Naive thymus-derived CD8-positive, alpha-beta T cell (primary cell): ENCODE measurements at regions of chr17 and their contacts with region 1.

Region 1: DNA sequence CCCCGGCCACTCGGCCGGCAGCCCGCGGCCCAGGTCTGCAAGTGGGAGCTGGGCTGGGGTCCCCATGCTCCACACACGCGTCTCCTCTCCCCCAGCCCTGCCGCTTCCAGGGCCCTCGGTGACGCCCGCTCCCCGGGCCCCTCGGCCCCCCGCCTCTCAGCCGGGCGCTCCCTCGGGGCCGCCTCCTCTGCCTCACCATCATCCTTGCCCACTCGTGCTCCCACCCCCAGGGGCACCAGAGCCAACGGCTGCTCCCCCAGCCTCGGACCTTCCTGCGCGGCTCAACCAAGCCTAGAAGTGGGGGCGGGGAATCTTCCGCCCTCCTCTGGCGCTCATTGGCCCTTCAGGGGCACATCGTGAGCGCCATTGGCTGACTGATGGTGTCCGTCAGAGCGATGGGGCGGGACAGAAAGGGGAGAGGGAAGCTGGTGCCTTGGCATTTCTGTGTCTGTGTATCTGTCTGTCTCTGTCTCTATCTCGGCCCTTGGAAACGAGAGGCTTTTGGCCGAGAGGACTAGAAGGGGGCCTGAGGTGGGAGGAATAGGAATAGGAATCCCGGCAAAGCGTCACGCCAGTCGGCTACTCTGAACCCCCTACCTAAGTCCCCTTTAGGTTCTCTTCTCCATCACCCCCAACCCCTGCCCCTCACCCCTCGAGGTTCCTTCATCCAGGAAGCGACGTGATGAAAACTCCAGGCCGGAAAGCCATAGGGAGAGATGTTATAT is 88.9 kb downstream of the CDC27 start:
- DNase-seq: peak; percentile 74 to 95 (median 88)
- ATAC-seq: peak; percentile 98 to 99
- H3K4me3 Mint-ChIP-seq: peak overlapping the region; percentile 92 to 100 (median 100)
- H3K27ac Mint-ChIP-seq: peak overlapping the region; percentile 91 to 100 (median 99)
- H3K4me1 Mint-ChIP-seq: peaks cover 11 to 39% (median 30%) of the 10 kb centered on the region in 4 donors
- H3K27me3 Mint-ChIP-seq: peaks cover 0 to 2% (median 0%) of the 10 kb centered on the region in 5 donors

Region 2: GRCh38 chr17:47066841-47067682 is 33.1 kb before region 1 on chr17:
- POLR2A ChIA-PET with region 1: interaction called, 10 read pairs
- DNase-seq: peak; percentile 57 to 91 (median 79)
- ATAC-seq: peak; percentile 95 to 99
- H3K4me3 Mint-ChIP-seq: peak overlapping the region; percentile 89 to 97 (median 93)
- H3K27ac Mint-ChIP-seq: peak overlapping the region; percentile 82 to 99 (median 98)
- H3K4me1 Mint-ChIP-seq: peaks cover 13 to 40% (median 37%) of the 10 kb centered on the region in 4 donors
- H3K27me3 Mint-ChIP-seq: no peaks in the 10 kb centered on the region

Region 3: GRCh38 chr17:47172698-47173565 is 72.8 kb after region 1 on chr17:
- POLR2A ChIA-PET with region 1: no interaction called
- DNase-seq: no peak
- ATAC-seq: no peak
- H3K4me3 Mint-ChIP-seq: no peak overlapping the region
- H3K27ac Mint-ChIP-seq: peak overlapping the region in 2 of 10 donors; percentile 29 to 91
- H3K4me1 Mint-ChIP-seq: peaks cover 8 to 54% (median 35%) of the 10 kb centered on the region in 4 donors
- H3K27me3 Mint-ChIP-seq: no peaks in the 10 kb centered on the region